Endothelial cell of umbilical vein (primary cell): ENCODE measurements at regions of chr2 and their contacts with region 1.

Region 1: GRCh38 chr2:189179570-189179950 is at the start of gene COL5A2:
- DNase-seq: peak; percentile 90
- H3K4me3 ChIP-seq: peak within 1 kb of the TSS; percentile 54 to 98 (median 76)
- H3K27ac ChIP-seq: peak within 1 kb of the TSS; percentile 65
- H3K4me1 ChIP-seq: peaks cover 15% of the 10 kb centered on the region
- H3K27me3 ChIP-seq: no peaks in the 10 kb centered on the region
- CTCF ChIP-seq: no peak
- POLR2A ChIP-seq: peak; percentile 88
- total RNA-seq, gene COL5A2: 123 and 138 TPM in 2 replicates

Region 2: GRCh38 chr2:189024901-189025618 is 154.5 kb before region 1 on chr2:
- CTCF ChIA-PET with region 1: no interaction called
- POLR2A ChIA-PET with region 1: no interaction called
- dilution Hi-C with region 1: no loop called
- intact Hi-C with region 1: no loop called
- DNase-seq: no peak
- H3K4me3 ChIP-seq: no peak overlapping the region
- H3K27ac ChIP-seq: no peak overlapping the region
- H3K4me1 ChIP-seq: no peaks in the 10 kb centered on the region
- H3K27me3 ChIP-seq: no peaks in the 10 kb centered on the region
- CTCF ChIP-seq: peak; percentile 25 to 31
- POLR2A ChIP-seq: no peak

Region 3: DNA sequence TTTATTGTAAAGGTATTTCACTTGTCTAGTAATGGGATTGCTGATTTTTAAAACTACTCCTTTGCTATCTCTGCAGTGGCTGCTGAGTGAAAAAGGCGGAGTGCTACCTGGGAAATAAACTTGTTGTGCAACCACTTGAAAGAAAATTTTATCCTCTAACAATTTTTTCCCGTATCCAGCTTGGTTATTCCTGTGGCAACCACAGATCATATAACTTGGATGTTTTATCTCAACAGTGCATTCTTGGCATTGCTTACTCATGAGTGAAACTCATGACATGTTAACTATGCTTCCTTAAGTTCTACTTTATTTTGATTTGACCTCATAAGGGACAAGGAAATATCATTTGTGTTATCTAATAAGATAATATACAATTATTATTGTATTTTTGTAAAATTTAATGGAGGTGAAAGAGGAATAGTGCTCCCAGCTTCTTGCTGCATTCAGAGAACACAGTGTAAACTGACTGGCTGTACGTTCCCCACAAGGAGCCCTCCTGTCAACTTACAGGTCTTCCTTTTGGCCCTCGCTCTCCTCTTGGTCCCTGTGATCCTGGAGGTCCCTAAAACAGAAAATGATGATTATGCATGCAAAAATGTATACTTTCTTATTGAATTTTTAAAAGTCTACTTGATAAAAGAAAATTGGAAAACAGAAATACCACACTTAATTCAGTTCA is 82.7 kb before region 1 on chr2:
- CTCF ChIA-PET with region 1: interaction called, 9 read pairs
- POLR2A ChIA-PET with region 1: no interaction called
- dilution Hi-C with region 1: no loop called
- intact Hi-C with region 1: loop called (anchors 1 kb)
- DNase-seq: peak; percentile 61
- H3K4me3 ChIP-seq: no peak overlapping the region
- H3K27ac ChIP-seq: peak overlapping the region; percentile 50
- H3K4me1 ChIP-seq: peaks cover 15% of the 10 kb centered on the region
- H3K27me3 ChIP-seq: no peaks in the 10 kb centered on the region
- CTCF ChIP-seq: no peak
- POLR2A ChIP-seq: no peak

Region 4: DNA sequence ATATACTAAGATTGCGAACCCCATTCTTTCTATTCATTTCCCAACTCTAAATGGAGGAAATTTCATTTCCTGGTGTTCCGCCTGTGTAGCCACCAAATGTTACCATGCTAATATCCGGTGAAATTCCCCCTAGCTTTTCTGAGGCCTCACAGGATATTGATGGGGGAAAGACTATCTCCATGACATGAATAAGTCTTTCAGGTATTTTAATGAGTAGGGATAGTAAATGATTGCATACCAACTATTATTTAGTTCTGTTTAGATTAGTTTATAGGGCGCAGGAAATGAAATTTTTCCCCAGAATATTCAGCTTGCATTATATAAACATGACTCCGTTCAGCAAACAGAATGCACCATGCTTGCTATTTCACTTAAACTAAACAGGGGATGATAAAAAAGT is 55.4 kb before region 1 on chr2:
- CTCF ChIA-PET with region 1: interaction called, 12 read pairs
- POLR2A ChIA-PET with region 1: no interaction called
- dilution Hi-C with region 1: no loop called
- intact Hi-C with region 1: no loop called
- DNase-seq: peak; percentile 15
- H3K4me3 ChIP-seq: no peak overlapping the region
- H3K27ac ChIP-seq: no peak overlapping the region
- H3K4me1 ChIP-seq: peaks cover 3% of the 10 kb centered on the region
- H3K27me3 ChIP-seq: no peaks in the 10 kb centered on the region
- CTCF ChIP-seq: no peak
- POLR2A ChIP-seq: no peak

Region 5: DNA sequence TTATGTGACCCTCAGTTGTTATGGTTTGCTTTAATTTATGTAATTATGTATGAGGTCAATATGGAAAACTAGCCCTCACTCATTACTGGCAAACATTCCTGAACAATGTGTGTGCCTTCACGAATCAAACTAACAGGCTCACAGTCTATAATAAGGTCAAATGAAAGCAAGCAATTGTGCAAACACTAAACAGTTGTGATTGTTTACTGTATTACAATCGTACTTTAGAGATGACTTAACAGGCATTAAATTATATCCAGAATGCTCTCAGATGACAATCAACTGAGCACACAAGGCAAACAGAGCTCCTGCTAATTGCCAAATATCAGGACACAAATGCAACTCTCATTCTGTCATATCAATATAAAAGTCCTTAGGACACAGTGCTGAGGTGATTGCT is 29.5 kb before region 1 on chr2:
- CTCF ChIA-PET with region 1: interaction called, 12 read pairs
- POLR2A ChIA-PET with region 1: interaction called, 3 read pairs
- dilution Hi-C with region 1: no loop called
- intact Hi-C with region 1: no loop called
- DNase-seq: peak; percentile 44
- H3K4me3 ChIP-seq: no peak overlapping the region
- H3K27ac ChIP-seq: no peak overlapping the region
- H3K4me1 ChIP-seq: no peaks in the 10 kb centered on the region
- H3K27me3 ChIP-seq: no peaks in the 10 kb centered on the region
- CTCF ChIP-seq: no peak
- POLR2A ChIP-seq: no peak

Region 6: DNA sequence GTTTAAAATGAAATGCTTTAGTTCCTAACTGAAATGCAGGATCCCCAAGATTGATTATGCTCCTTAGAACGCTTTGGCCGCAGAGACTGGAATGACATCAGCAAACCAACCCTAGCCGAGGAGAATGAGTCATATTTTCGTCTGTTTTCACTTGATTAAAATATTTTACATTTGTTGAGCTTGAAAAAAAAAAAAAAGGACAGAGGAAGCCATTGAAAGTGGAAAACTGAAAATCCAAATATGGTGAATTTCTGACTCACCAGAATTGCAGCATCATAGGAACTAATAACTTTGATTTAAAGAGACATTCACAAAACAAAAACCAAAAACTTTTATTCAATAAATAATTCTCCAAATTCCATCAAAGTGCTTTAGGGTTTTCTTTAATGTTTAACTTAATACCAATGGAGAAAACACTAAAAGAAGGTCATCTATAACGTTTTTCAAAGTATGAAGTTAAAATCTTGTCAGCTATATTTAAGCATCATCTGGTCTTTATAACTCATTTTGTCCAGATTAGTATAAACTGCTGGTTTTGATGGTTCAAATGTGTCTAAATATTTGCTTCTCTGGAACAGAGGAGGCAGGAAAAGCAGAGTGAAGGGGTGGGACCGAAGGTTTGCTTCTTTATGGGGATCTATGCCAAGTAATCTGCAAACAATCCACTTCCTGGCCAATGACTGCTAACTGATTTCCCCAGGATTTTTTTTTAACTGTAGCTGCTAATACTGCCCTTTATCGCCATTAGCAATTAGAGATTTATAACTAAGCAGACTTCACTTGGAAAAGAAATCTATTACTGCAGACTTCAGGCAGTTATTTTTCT is 30.9 kb after region 1 on chr2:
- CTCF ChIA-PET with region 1: interaction called, 55 read pairs
- POLR2A ChIA-PET with region 1: interaction called, 3 read pairs
- dilution Hi-C with region 1: no loop called
- intact Hi-C with region 1: loop called (anchors 1 kb)
- DNase-seq: peak; percentile 94
- H3K4me3 ChIP-seq: peak overlapping the region in 2 of 3 experiments; percentile 16 to 68
- H3K27ac ChIP-seq: peak overlapping the region; percentile 95
- H3K4me1 ChIP-seq: peaks cover 35% of the 10 kb centered on the region
- H3K27me3 ChIP-seq: no peaks in the 10 kb centered on the region
- CTCF ChIP-seq: no peak
- POLR2A ChIP-seq: no peak

Region 7: DNA sequence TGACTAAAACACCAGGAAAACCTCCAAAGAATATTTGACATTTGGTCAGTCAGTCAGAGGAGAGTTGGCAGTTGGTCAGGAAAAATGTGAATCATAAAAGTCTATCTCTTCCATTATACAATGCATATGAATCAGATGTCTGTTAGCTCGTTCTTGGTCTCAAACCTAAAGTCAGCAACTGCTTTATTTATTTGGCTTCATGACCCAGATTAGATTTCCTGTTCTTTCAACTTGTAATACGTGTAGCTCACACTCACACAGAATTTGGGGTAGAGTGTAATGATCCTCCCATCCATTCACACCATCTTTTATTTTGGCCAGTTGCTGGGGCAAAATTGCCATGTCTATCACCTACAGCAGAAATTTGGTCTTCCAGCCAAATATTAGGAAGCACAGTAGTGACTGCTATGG is 81.9 kb after region 1 on chr2:
- CTCF ChIA-PET with region 1: interaction called, 19 read pairs
- POLR2A ChIA-PET with region 1: no interaction called
- dilution Hi-C with region 1: no loop called
- intact Hi-C with region 1: no loop called
- DNase-seq: peak; percentile 95
- H3K4me3 ChIP-seq: no peak overlapping the region
- H3K27ac ChIP-seq: peak overlapping the region; percentile 28
- H3K4me1 ChIP-seq: peaks cover 9% of the 10 kb centered on the region
- H3K27me3 ChIP-seq: no peaks in the 10 kb centered on the region
- CTCF ChIP-seq: no peak
- POLR2A ChIP-seq: no peak

Region 8: GRCh38 chr2:189287982-189288521 is 108.5 kb after region 1 on chr2:
- CTCF ChIA-PET with region 1: interaction called, 98 read pairs
- POLR2A ChIA-PET with region 1: no interaction called
- dilution Hi-C with region 1: no loop called
- intact Hi-C with region 1: loop called (anchors 1 kb)
- DNase-seq: peak; percentile 82
- H3K4me3 ChIP-seq: no peak overlapping the region
- H3K27ac ChIP-seq: no peak overlapping the region
- H3K4me1 ChIP-seq: peaks cover 6% of the 10 kb centered on the region
- H3K27me3 ChIP-seq: no peaks in the 10 kb centered on the region
- CTCF ChIP-seq: peak; percentile 41
- POLR2A ChIP-seq: no peak

Region 9: DNA sequence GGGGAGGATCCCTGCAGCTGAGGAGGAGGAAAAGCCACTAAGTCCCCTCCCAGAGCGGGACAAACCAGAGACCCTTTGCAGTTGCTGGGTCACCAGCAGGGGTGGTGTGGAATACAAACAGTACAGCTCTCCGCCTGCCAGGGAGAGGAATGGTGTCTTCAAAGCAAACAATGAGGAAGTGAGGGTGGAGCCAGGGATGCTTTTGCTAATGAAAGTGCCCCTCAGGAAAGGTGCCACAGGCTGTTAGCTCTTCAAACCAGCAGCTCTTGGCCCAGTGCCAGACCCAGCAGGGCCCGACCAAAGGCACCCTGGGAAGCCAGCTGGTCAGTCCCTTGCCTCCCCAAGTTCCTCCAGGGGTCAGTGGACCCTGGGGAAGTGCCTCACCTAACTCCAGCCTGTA is 1037.3 kb after region 1 on chr2:
- CTCF ChIA-PET with region 1: no interaction called
- POLR2A ChIA-PET with region 1: no interaction called
- dilution Hi-C with region 1: no loop called
- intact Hi-C with region 1: no loop called
- DNase-seq: peak; percentile 11
- H3K4me3 ChIP-seq: no peak overlapping the region
- H3K27ac ChIP-seq: no peak overlapping the region
- H3K4me1 ChIP-seq: peaks cover 2% of the 10 kb centered on the region
- H3K27me3 ChIP-seq: no peaks in the 10 kb centered on the region
- CTCF ChIP-seq: no peak
- POLR2A ChIP-seq: no peak